ENCODE measurements at regions of chr1 and their contacts with region 1.

Region 1: GRCh38 chr1:147640553-147641165 is 29.7 kb downstream of the ACP6 start:
- DNase-seq: peak; percentile 80
- ATAC-seq: peak; percentile 82
- H3K4me3 ChIP-seq: no peak overlapping the region
- H3K4me3 Mint-ChIP-seq: no peak overlapping the region
- H3K27ac ChIP-seq: no peak overlapping the region
- H3K27ac Mint-ChIP-seq: no peak overlapping the region
- H3K4me1 ChIP-seq: peaks cover 0 to 3% of the 10 kb centered on the region in 2 donors
- H3K4me1 Mint-ChIP-seq: peaks cover 2% of the 10 kb centered on the region
- H3K27me3 ChIP-seq: no peaks in the 10 kb centered on the region
- H3K27me3 Mint-ChIP-seq: no peaks in the 10 kb centered on the region
- CTCF ChIP-seq: peak; percentile 74

Region 2: DNA sequence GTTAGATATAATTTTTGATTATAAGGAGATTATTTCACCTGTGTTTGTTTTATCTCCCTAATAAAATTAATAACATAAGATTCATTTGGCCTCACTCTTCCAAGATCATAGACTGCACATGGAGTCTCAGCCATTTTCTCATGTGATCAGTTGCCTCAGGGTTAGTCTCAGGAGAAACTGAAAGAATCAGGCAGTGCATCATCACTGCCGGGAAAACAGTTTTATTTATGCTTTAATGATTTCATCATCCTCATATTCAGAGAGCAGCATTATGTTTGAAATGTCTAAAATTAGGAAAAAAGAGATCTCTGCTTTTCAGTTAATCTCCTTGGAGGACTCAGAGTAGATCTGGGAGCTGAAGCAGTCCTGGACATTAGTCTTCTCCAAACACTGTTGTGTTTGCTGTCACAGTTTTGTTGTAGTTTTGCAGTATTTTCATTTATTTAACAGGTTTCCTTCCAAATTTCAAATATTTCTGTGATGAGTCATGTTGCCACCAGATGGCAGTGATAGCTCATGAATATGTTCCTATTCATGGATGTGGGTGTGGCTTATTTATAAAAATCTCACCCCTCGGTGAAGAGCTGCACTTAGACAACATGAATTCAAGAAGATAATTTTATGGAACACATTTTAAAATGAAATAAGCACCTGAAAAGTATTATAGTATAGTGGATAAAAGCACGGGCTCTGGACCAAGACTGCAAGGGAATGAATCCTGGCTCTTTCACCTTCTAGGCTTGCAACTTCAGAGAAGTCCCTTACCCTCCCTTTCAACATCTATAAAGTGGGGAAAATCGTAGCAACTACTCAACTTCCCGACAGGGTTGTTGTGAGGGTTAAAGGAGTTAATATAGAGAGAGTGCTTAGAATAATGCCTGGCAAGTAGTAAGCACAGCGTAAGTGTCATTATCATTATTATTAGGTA is 367.0 kb before region 1 on chr1:
- CTCF ChIA-PET with region 1: interaction called, 3 read pairs
- POLR2A ChIA-PET with region 1: no interaction called
- intact Hi-C with region 1: loop called (anchors 2 kb)
- DNase-seq: peak; percentile 59
- ATAC-seq: no peak
- H3K4me3 ChIP-seq: no peak overlapping the region
- H3K4me3 Mint-ChIP-seq: no peak overlapping the region
- H3K27ac ChIP-seq: no peak overlapping the region
- H3K27ac Mint-ChIP-seq: no peak overlapping the region
- H3K4me1 ChIP-seq: no peaks in the 10 kb centered on the region
- H3K4me1 Mint-ChIP-seq: no peaks in the 10 kb centered on the region
- H3K27me3 ChIP-seq: no peaks in the 10 kb centered on the region
- H3K27me3 Mint-ChIP-seq: no peaks in the 10 kb centered on the region
- CTCF ChIP-seq: peak; percentile 78

Region 3: DNA sequence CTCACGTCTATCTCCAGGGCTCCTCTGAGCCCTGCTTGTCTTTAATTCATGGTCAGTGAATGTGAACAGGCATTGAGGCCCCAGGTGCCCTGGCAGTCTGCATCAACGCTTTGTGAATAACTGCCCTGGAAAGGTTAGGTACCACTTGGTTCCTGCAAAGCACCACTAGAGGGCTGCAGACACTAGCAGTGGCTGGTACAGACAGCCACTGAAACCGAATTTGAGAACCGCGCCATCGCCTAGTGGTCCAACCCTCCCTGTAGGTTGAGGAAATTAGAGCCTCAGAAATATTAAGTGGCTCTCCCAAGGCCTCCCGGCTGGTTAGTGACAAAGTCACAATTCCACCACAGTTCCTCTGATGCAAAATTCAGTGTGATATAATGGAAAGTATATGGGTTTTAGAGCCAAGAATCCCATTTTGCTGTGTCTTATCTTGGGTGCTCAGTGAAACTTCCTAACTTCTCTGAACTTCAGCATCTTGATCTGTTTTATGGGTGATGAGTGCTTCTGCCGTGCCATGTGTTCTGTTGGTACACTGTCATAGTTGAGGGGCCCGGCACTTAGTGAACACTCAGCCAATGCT is 145.6 kb before region 1 on chr1:
- CTCF ChIA-PET with region 1: interaction called, 7 read pairs
- POLR2A ChIA-PET with region 1: no interaction called
- intact Hi-C with region 1: loop called (anchors 1 kb)
- DNase-seq: peak; percentile 75
- ATAC-seq: peak; percentile 82
- H3K4me3 ChIP-seq: no peak overlapping the region
- H3K4me3 Mint-ChIP-seq: no peak overlapping the region
- H3K27ac ChIP-seq: no peak overlapping the region
- H3K27ac Mint-ChIP-seq: no peak overlapping the region
- H3K4me1 ChIP-seq: peaks cover 0 to 3% of the 10 kb centered on the region in 2 donors
- H3K4me1 Mint-ChIP-seq: no peaks in the 10 kb centered on the region
- H3K27me3 ChIP-seq: peaks cover 0 to 6% (median 3%) of the 10 kb centered on the region in 4 experiments
- H3K27me3 Mint-ChIP-seq: peaks cover 24% of the 10 kb centered on the region
- CTCF ChIP-seq: peak; percentile 92

Region 4: DNA sequence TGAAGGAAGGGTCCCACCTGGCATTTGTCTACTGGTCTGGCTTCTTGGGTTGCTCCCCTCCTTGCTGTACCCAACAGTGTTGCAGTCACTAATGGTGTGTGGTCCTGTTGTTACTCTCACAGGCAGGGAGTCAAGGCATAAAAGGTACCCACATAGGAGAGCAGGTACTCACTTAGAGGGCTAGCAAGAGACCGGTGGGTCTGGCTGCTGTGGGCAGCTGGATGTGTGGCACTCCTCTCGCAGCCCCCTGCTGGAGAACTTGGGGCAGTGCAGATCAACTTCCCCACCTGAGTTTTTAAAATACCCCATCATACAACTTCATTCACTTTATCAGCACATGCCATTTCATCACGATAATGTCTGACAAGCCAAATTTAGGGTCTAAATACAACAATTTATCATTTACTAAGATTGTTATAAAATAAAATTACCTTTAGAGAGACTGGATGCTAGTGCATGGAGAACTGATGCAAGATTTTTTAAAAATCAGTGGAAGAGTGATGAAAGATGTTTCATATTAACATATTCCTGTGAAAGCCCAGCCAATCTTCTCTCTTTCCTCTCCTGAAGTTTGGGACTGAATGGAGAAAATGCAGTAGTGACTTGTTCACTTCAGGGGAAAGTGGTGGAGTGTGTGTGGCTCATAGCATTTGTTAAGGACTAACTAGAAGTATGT is 13.1 kb before region 1 on chr1:
- CTCF ChIA-PET with region 1: interaction called, 14 read pairs
- POLR2A ChIA-PET with region 1: no interaction called
- intact Hi-C with region 1: no loop called
- DNase-seq: peak; percentile 67
- ATAC-seq: peak; percentile 75
- H3K4me3 ChIP-seq: no peak overlapping the region
- H3K4me3 Mint-ChIP-seq: no peak overlapping the region
- H3K27ac ChIP-seq: no peak overlapping the region
- H3K27ac Mint-ChIP-seq: no peak overlapping the region
- H3K4me1 ChIP-seq: peaks cover 7% of the 10 kb centered on the region in 2 donors
- H3K4me1 Mint-ChIP-seq: peaks cover 11% of the 10 kb centered on the region
- H3K27me3 ChIP-seq: no peaks in the 10 kb centered on the region
- H3K27me3 Mint-ChIP-seq: no peaks in the 10 kb centered on the region
- CTCF ChIP-seq: peak; percentile 97

Region 5: DNA sequence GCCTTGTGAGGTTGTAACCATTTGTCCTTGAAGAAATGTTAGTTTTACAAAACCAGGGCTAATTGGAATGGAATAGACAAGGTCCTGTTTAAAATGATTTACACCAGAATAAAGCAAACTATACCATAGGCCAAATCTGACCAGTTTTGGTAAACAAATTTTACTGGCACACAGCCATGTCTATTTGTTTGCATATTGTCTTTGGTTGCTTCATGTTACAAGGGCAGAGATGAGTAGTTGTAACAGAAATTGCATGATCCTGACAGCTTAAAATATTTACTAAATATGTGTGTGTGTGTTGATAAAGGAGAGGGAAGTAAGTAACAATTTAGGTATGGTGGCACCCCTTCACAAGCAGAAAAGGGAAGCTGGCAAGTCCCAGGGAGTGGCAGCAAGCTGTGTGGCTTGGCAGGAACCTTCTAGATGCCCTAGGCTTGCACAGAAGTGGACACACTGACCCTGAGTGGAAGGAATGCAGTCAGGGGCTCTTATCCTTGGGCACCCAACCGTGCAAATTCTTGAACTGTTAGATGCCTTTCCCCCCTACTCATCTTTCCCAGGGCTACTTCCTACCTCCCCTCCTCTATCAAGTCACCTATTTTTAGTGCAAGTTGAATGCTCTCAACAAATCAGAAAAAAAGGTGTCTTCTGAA is 10.7 kb after region 1 on chr1:
- CTCF ChIA-PET with region 1: interaction called, 10 read pairs
- POLR2A ChIA-PET with region 1: no interaction called
- intact Hi-C with region 1: no loop called
- DNase-seq: no peak
- ATAC-seq: no peak
- H3K4me3 ChIP-seq: no peak overlapping the region
- H3K4me3 Mint-ChIP-seq: no peak overlapping the region
- H3K27ac ChIP-seq: no peak overlapping the region
- H3K27ac Mint-ChIP-seq: no peak overlapping the region
- H3K4me1 ChIP-seq: no peaks in the 10 kb centered on the region
- H3K4me1 Mint-ChIP-seq: no peaks in the 10 kb centered on the region
- H3K27me3 ChIP-seq: no peaks in the 10 kb centered on the region
- H3K27me3 Mint-ChIP-seq: no peaks in the 10 kb centered on the region
- CTCF ChIP-seq: no peak

Region 6: GRCh38 chr1:147890177-147890790 is 249.6 kb after region 1 on chr1:
- CTCF ChIA-PET with region 1: interaction called, 20 read pairs
- POLR2A ChIA-PET with region 1: no interaction called
- intact Hi-C with region 1: loop called (anchors 2 kb)
- DNase-seq: peak; percentile 61
- ATAC-seq: peak; percentile 65
- H3K4me3 ChIP-seq: no peak overlapping the region
- H3K4me3 Mint-ChIP-seq: no peak overlapping the region
- H3K27ac ChIP-seq: no peak overlapping the region
- H3K27ac Mint-ChIP-seq: no peak overlapping the region
- H3K4me1 ChIP-seq: no peaks in the 10 kb centered on the region
- H3K4me1 Mint-ChIP-seq: peaks cover 2% of the 10 kb centered on the region
- H3K27me3 ChIP-seq: no peaks in the 10 kb centered on the region
- H3K27me3 Mint-ChIP-seq: peaks cover 25% of the 10 kb centered on the region
- CTCF ChIP-seq: peak; percentile 69

Measured in B cell (primary cell).